Activated naive CD4-positive, alpha-beta T cell treated with anti-CD3 and anti-CD28 coated beads for 36 hours (primary cell): ENCODE measurements at regions of chr1 and their contacts with region 1.

Region 1: DNA sequence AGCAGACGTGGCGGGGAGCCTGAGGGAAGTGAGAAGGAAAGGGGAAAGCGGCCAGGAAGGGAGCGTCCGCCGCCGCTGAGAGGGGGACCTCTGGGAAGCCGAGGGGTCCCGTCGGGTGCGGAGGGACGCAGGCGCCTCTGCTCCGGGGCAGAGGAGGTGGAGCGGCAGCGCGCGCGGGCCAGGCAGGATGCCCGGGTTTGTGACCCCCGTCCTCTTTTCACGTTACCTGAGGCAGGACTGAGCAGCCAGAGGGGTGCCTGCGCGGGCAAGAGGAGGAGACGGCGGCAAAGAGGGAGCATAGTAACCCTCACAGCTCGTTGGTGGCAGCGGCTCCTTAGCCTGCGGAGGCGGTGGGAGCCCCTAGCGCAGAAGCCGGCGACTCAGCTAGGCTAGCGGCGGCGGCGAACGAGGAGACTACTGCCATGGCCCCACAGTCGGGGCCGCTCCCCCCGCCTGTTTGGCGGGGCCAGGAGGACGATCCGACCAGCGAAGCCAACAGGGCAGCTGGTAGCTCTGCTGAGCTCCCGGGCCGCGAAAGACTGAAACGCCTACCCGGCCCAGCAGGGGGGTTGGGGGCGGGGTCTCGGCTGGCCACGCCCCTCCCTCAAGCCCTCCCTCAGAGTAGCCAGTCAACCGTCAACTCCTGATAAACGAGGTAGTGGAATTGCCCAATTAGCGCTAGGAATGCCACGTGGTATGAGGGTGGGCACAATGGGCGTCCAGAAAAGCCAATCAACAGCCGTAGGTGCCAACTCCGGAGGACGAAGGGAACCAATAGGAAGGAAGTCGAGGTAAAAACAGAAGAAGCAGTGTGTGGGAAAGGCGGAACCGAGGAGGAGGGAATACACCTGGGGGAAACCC is at the start of gene TESK2:
- DNase-seq: peak; percentile 99
- H3K4me3 Mint-ChIP-seq: no peak within 1 kb of the TSS
- H3K27ac Mint-ChIP-seq: no peak within 1 kb of the TSS
- H3K4me1 Mint-ChIP-seq: peaks cover 6% of the 10 kb centered on the region
- H3K27me3 Mint-ChIP-seq: no peaks in the 10 kb centered on the region
- total RNA-seq, gene TESK2: 4.8 to 6.7 TPM

Region 2: DNA sequence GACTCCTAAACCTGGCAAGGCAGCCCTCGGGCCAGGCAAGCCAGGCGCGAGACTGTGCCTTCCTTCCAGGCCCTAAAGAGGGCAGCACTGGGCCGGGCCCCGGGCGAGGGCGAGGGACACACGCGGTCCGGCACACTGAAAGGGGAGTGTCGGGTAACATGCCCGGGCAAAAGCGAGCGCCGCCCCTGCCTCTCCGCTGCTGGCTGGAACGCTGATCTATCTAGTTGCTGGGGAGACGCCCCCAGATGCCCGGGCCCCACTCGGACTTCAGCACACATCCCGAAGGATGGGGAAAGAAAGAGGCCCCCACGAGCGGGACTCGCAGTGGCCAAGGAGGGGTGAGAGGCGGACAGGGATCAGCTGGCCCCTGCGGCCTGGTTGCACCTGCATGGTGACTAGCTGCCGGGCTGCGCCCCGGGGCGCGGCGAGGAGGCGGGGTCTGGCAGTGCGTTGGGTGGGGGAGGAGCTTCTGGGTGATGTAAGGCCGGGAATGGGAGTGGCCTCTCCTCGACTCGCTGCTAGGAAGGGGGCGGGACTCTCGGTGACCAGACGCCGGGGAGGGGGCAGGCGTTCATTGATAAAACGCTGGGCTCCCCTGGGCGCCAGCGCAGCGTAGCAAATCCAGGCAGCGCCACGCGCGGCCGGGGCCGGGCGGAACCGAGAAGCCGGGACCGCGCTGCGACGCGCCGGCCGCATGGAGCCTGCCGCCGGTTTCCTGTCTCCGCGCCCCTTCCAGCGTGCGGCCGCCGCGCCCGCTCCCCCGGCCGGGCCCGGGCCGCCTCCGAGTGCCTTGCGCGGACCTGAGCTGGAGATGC is 690.9 kb before region 1 on chr1 and contains the start of gene PLK3:
- CTCF ChIA-PET with region 1: interaction called, 3 read pairs
- intact Hi-C with region 1: loop called (anchors 2 kb)
- DNase-seq: peak; percentile 99
- H3K4me3 Mint-ChIP-seq: peak within 1 kb of the TSS; percentile 81
- H3K27ac Mint-ChIP-seq: peak within 1 kb of the TSS; percentile 100
- H3K4me1 Mint-ChIP-seq: peaks cover 36% of the 10 kb centered on the region
- H3K27me3 Mint-ChIP-seq: no peaks in the 10 kb centered on the region
- total RNA-seq, gene PLK3: 44.2 to 46.7 TPM

Region 3: DNA sequence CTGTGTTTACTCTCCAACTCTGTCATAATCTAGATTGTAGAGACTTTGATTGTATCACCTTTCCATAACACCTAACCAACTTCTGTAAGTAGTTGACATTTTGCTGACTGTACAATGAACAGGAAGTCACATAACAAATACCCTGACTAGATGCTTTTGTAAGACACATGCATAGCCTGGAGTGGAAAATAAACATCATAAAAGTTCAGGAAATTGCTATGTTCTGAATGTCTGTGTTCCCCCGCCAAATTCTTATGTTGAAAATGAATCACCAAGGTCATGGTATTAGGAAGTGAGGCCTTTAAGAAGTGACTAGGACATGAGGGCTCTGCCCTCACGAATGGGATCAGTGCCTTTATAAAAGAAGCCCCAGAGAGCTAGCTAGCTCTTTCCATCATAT is 244.1 kb before region 1 on chr1:
- CTCF ChIA-PET with region 1: no interaction called
- intact Hi-C with region 1: loop called (anchors 2 kb)
- DNase-seq: peak; percentile 18
- H3K4me3 Mint-ChIP-seq: no peak overlapping the region
- H3K27ac Mint-ChIP-seq: peak overlapping the region; percentile 87
- H3K4me1 Mint-ChIP-seq: peaks cover 19% of the 10 kb centered on the region
- H3K27me3 Mint-ChIP-seq: no peaks in the 10 kb centered on the region

Region 4: DNA sequence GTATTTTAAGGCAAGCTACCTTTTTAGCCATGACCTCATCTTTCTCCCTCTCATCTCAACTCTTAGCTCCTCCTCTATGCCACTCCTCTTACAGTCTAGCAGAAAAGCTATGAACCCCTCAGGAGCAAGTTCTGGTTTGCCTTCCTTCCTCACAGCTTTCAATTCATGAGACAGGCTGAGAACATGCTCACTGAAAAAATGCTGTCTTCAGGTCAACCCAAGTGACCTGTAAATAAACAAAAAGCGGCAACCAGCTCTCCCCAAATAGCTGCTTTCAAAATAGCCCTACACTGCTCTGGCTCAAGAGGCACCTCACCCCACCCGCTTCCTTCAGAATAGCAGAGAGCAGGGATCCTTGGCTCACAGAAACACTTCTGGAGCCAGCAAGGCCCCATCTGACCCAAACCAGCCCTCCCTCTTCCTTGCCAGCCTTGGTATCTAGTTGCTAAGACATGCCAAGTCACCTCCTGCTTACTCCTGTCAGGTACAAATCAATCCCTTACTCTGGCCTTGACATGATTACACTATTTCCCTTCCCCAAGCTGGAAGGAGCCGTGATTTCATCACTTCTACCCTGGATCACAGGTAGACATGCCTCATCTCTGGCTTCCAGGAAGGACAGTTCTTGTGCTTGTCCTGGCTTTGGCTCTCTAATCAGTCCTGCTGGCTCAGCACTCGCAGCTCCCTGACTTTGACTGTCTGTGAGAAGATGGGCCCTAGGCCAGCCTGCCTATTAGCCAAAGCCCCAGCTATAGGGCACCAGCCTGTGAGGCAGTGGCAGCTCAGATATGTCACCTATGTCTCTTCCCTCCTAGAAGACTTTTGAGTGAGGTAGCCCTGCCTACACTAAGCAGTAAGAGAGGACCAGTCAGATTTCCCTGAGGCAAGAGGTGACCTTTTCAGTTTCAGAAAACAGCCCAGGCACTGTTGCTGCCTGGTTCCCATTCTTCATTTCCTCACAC is 141.9 kb before region 1 on chr1:
- CTCF ChIA-PET with region 1: interaction called, 175 read pairs
- intact Hi-C with region 1: no loop called
- DNase-seq: no peak
- H3K4me3 Mint-ChIP-seq: no peak overlapping the region
- H3K27ac Mint-ChIP-seq: no peak overlapping the region
- H3K4me1 Mint-ChIP-seq: peaks cover 4% of the 10 kb centered on the region
- H3K27me3 Mint-ChIP-seq: no peaks in the 10 kb centered on the region

Region 5: DNA sequence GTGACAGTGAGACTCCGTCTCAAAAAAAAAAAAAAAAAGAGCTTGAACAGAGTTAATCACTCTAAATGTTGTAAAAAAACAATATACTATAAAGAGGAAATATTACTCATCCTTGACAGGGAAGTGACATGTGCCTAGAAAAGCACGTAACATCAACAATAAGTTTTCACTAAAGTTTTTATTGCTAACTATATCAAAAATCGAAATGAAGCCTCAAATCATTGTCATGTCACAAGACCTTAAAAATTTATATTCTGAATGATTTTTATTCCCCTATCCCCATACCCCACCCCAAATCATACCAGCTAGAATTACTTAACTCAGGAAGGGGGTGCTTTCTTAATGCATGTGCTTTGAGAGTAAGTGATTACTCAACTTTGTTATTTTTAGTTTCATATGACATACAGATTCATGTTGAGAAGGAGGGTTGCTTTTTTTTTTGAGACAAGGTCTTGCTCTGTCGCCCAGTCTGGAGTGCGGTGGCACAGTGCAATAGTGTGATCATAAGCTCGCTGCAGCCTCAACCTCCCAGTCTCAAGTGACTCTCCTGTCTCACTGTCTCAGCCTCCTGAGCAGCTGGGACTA is 97.0 kb before region 1 on chr1:
- CTCF ChIA-PET with region 1: interaction called, 6 read pairs
- intact Hi-C with region 1: loop called (anchors 1 kb)
- DNase-seq: peak; percentile 53
- H3K4me3 Mint-ChIP-seq: no peak overlapping the region
- H3K27ac Mint-ChIP-seq: peak overlapping the region; percentile 82
- H3K4me1 Mint-ChIP-seq: peaks cover 17% of the 10 kb centered on the region
- H3K27me3 Mint-ChIP-seq: no peaks in the 10 kb centered on the region

Region 6: DNA sequence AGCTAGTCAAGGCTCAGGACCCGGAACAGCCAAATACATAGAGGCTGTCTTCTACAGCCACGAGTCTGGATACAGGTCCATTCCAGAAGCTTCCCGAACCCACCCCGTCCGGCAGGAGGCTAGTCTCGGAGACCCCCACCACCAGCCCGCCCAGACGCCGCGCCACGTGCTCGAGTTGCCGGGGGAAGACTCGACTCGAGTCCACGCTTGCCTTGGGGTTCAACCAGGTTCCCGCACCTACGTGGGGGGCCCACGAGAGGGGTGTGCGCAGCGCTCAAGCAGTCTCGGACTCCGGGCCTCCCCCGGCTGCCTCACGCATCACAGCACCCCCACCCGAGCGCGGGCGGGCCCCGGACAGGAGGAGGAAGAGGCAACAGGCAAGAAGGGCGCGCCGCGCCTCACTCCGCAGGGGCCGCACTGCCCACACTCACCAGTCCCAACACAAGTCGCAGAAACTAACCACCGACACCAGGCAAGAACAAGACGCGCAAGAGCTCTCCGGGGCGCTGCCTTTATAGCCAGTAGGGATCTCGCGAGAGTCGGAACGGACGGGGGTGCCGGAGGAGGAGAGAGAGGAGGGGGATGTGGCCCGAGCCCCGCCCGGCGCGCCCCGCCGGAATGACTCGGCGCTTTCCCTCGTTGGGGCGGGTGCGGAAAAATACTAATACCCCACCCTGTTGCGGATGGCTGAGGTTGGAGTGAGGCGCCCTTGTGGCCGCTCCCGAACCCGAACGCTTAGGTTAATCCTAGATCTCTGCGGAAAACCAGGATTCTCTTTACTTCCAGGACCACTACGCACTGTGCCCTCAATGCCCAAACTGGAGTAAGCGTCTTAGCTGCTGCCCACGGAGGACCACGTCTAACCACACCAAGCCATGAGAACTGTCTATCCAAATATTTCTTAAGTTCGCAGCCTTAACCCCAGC is 30.8 kb after region 1 on chr1 and contains the start of gene PRDX1:
- CTCF ChIA-PET with region 1: interaction called, 3 read pairs
- intact Hi-C with region 1: loop called (anchors 1 kb)
- DNase-seq: peak; percentile 96
- H3K4me3 Mint-ChIP-seq: peak within 1 kb of the TSS; percentile 93
- H3K27ac Mint-ChIP-seq: peak within 1 kb of the TSS; percentile 88
- H3K4me1 Mint-ChIP-seq: peaks cover 46% of the 10 kb centered on the region
- H3K27me3 Mint-ChIP-seq: no peaks in the 10 kb centered on the region
- total RNA-seq, gene PRDX1: 596 to 641 TPM

Region 7: GRCh38 chr1:45583264-45583665 is 92.4 kb after region 1 on chr1:
- CTCF ChIA-PET with region 1: interaction called, 13 read pairs
- intact Hi-C with region 1: loop called (anchors 1 kb)
- DNase-seq: peak; percentile 96
- H3K4me3 Mint-ChIP-seq: peak overlapping the region; percentile 95
- H3K27ac Mint-ChIP-seq: peak overlapping the region; percentile 98
- H3K4me1 Mint-ChIP-seq: peaks cover 22% of the 10 kb centered on the region
- H3K27me3 Mint-ChIP-seq: no peaks in the 10 kb centered on the region